ENCODE measurements at regions of chr12 and their contacts with region 1.

Region 1: GRCh38 chr12:3885277-3886094 is 12.3 kb upstream of the PARP11 start:
- DNase-seq: no peak
- ATAC-seq: peak; percentile 31 to 45
- H3K4me3 ChIP-seq: peak overlapping the region; percentile 48
- H3K27ac ChIP-seq: peak overlapping the region; percentile 48
- H3K4me1 ChIP-seq: no peaks in the 10 kb centered on the region
- H3K27me3 ChIP-seq: no peaks in the 10 kb centered on the region

Region 2: GRCh38 chr12:3947781-3948180 is 62.3 kb after region 1 on chr12:
- intact Hi-C with region 1: no loop called
- DNase-seq: no peak
- ATAC-seq: no peak
- H3K4me3 ChIP-seq: no peak overlapping the region
- H3K27ac ChIP-seq: no peak overlapping the region
- H3K4me1 ChIP-seq: no peaks in the 10 kb centered on the region
- H3K27me3 ChIP-seq: no peaks in the 10 kb centered on the region

Region 3: DNA sequence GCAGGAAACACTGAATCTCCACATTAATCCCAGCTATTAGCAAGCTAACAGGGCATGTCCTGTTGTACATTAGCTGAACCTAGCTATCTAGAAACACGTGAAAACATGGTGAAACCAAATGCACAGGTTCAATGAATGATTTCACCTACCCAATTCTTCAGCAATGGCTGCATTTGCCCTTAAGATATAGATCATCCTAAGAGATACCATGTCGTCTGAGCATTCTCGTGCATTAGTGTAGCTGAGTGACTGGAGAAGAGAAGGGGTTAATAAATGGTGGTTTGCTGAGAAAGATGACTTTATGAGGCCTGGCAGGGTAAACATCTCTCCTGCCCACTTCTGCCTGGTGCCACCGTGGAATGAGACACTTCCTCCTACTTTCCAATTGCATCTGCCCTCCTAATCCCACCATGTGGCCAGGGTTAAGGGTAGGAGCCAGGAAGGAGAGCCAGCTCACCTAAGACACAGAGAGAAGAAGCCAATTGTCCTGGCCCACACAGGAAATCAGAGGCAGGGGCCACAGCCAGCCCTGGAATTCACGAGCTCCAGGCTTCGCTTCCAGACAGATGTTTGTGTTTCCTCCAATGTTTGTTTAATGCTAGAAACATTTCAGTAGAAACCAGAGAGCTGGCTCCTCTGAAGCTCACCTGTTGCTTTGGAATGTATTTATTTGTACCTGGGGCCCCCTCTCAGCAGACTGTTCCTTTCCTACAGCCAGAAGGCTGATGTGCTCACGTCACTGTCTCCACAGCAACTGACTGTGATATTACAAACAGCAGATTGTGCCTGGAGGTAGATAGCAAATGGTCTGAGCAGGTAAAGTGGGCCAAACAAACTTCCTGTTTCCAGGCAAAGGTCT is 113.7 kb after region 1 on chr12:
- intact Hi-C with region 1: loop called in 1 of 4 experiments (anchors 10 kb)
- DNase-seq: no peak
- ATAC-seq: no peak
- H3K4me3 ChIP-seq: no peak overlapping the region
- H3K27ac ChIP-seq: no peak overlapping the region
- H3K4me1 ChIP-seq: no peaks in the 10 kb centered on the region
- H3K27me3 ChIP-seq: no peaks in the 10 kb centered on the region

Region 4: GRCh38 chr12:4030929-4031702 is 145.6 kb after region 1 on chr12:
- intact Hi-C with region 1: loop called in 3 of 4 experiments (anchors 5 to 10 kb)
- DNase-seq: peak; percentile 90 to 93 (median 93)
- ATAC-seq: peak; percentile 99
- H3K4me3 ChIP-seq: peak overlapping the region; percentile 41
- H3K27ac ChIP-seq: peak overlapping the region; percentile 18
- H3K4me1 ChIP-seq: no peaks in the 10 kb centered on the region
- H3K27me3 ChIP-seq: no peaks in the 10 kb centered on the region

Region 5: GRCh38 chr12:4037747-4038312 is 152.3 kb after region 1 on chr12:
- intact Hi-C with region 1: loop called in 3 of 4 experiments (anchors 5 to 10 kb)
- DNase-seq: peak in 1 of 3 donors; percentile 52
- ATAC-seq: peak in 1 of 2 donors; percentile 33
- H3K4me3 ChIP-seq: no peak overlapping the region
- H3K27ac ChIP-seq: no peak overlapping the region
- H3K4me1 ChIP-seq: no peaks in the 10 kb centered on the region
- H3K27me3 ChIP-seq: no peaks in the 10 kb centered on the region